Caco-2 (cell line): ENCODE measurements at regions of chr2 and their contacts with region 1.

Region 1: DNA sequence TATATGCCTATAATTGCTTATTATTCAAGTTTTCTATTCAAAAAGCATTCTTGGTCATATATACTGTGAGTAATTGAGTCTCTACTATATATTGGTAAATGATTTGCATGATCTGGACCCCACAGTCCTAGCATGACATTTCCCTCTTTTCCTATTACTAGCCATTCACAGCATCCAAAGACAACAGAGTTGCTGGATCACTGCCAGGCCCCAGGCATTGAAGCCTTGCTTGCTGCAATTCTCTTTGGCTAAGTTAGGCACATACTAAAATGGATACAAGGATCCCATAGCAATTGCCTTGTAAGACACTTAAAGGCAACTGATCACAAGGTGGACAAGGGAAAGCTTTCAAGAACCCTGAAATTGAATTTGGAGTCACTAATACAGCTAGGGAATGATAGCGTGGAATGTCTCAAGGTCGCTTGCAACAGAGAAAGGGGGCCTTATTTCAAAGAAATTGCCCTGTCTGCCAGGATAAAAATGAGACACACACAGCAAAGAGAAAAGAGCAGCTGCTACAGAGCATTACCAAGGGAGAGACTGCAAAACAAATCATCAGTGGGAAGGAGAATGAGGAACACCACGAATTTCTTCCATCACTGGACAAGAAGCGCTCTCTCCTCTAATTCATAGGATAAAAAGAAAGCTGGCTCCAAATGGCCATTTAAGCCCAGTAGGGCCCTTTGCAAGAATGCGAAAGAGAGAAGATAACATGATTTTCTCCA is 77.1 kb upstream of the EPHA4 start:
- DNase-seq: no peak
- H3K4me3 ChIP-seq: no peak overlapping the region
- H3K4me3 Mint-ChIP-seq: no peak overlapping the region
- H3K27ac Mint-ChIP-seq: no peak overlapping the region
- H3K4me1 ChIP-seq: no peaks in the 10 kb centered on the region
- H3K4me1 Mint-ChIP-seq: no peaks in the 10 kb centered on the region
- H3K27me3 ChIP-seq: no peaks in the 10 kb centered on the region
- H3K27me3 Mint-ChIP-seq: no peaks in the 10 kb centered on the region
- CTCF ChIP-seq: no peak

Region 2: GRCh38 chr2:221176667-221177066 is 472.5 kb before region 1 on chr2:
- CTCF ChIA-PET with region 1: no interaction called
- POLR2A ChIA-PET with region 1: interaction called, 10 read pairs
- intact Hi-C with region 1: no loop called
- DNase-seq: no peak
- H3K4me3 ChIP-seq: no peak overlapping the region
- H3K4me3 Mint-ChIP-seq: no peak overlapping the region
- H3K27ac Mint-ChIP-seq: no peak overlapping the region
- H3K4me1 ChIP-seq: no peaks in the 10 kb centered on the region
- H3K4me1 Mint-ChIP-seq: no peaks in the 10 kb centered on the region
- H3K27me3 ChIP-seq: no peaks in the 10 kb centered on the region
- H3K27me3 Mint-ChIP-seq: no peaks in the 10 kb centered on the region
- CTCF ChIP-seq: no peak

Region 3: GRCh38 chr2:222228054-222228453 is 578.8 kb after region 1 on chr2:
- CTCF ChIA-PET with region 1: no interaction called
- POLR2A ChIA-PET with region 1: no interaction called
- intact Hi-C with region 1: no loop called
- DNase-seq: no peak
- H3K4me3 ChIP-seq: no peak overlapping the region
- H3K4me3 Mint-ChIP-seq: no peak overlapping the region
- H3K27ac Mint-ChIP-seq: no peak overlapping the region
- H3K4me1 ChIP-seq: no peaks in the 10 kb centered on the region
- H3K4me1 Mint-ChIP-seq: no peaks in the 10 kb centered on the region
- H3K27me3 ChIP-seq: no peaks in the 10 kb centered on the region; the same call in 1 of the 2 replicates
- H3K27me3 Mint-ChIP-seq: peaks cover 21% of the 10 kb centered on the region
- CTCF ChIP-seq: no peak